Heart right ventricle (tissue), 16 donors: ENCODE measurements at regions of chr3 and their contacts with region 1.

Region 1: GRCh38 chr3:143119009-143119914 is at the start of gene CHST2:
- DNase-seq: peak; percentile 58 to 75
- ATAC-seq: peak; percentile 93 to 96 (median 95)
- H3K4me3 ChIP-seq: peak within 1 kb of the TSS; percentile 39 to 89 (median 76)
- H3K27ac ChIP-seq: peak within 1 kb of the TSS in 9 of 10 donors; percentile 42 to 85 (median 71)
- H3K4me1 ChIP-seq: peaks cover 0 to 47% (median 10%) of the 10 kb centered on the region in 9 donors
- H3K27me3 ChIP-seq: peaks cover 0 to 56% (median 20%) of the 10 kb centered on the region in 7 donors
- CTCF ChIP-seq: peak in 1 of 9 donors; percentile 9
- total RNA-seq, gene CHST2: 0.89 to 7.0 (median 1.7) TPM

Region 2: GRCh38 chr3:143302638-143303171 is 183.4 kb after region 1 on chr3:
- intact Hi-C with region 1: loop called in 1 of 10 experiments (anchors 10 kb)
- DNase-seq: peak; percentile 70 to 74
- ATAC-seq: peak; percentile 81 to 93 (median 90)
- H3K4me3 ChIP-seq: no peak overlapping the region
- H3K27ac ChIP-seq: peak overlapping the region in 7 of 10 donors; percentile 14 to 52 (median 37)
- H3K4me1 ChIP-seq: peaks cover 0 to 49% (median 30%) of the 10 kb centered on the region in 9 donors
- H3K27me3 ChIP-seq: no peaks in the 10 kb centered on the region
- CTCF ChIP-seq: no peak

Region 3: DNA sequence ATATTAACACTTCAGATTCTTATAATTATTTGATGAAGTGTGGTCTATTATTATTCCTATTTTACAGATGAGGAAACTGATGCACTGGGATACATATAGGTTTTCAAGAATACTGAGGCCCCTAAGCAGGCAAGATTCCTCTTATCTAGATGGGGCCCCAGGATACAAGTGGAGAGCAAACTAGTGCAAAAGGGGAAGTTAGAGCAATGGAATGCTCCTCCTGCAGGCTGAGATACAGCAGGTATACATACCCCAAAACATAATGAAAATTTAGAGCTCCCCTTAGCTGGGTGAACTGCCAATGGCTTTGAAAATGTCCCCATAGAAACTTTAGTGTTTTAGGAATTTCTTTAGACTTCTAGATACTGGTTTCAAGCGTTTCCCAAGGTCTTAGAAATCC is 247.4 kb after region 1 on chr3:
- intact Hi-C with region 1: no loop called
- DNase-seq: no peak
- ATAC-seq: no peak
- H3K4me3 ChIP-seq: no peak overlapping the region
- H3K27ac ChIP-seq: no peak overlapping the region
- H3K4me1 ChIP-seq: no peaks in the 10 kb centered on the region
- H3K27me3 ChIP-seq: no peaks in the 10 kb centered on the region
- CTCF ChIP-seq: no peak

Region 4: GRCh38 chr3:143433787-143434378 is 314.6 kb after region 1 on chr3:
- intact Hi-C with region 1: loop called in 1 of 10 experiments (anchors 10 kb)
- DNase-seq: no peak
- ATAC-seq: no peak
- H3K4me3 ChIP-seq: no peak overlapping the region
- H3K27ac ChIP-seq: no peak overlapping the region
- H3K4me1 ChIP-seq: no peaks in the 10 kb centered on the region
- H3K27me3 ChIP-seq: no peaks in the 10 kb centered on the region
- CTCF ChIP-seq: peak in 6 of 9 donors; percentile 21 to 48 (median 29)

Region 5: GRCh38 chr3:143644370-143645089 is 525.3 kb after region 1 on chr3:
- intact Hi-C with region 1: loop called in 3 of 10 experiments (anchors 10 kb)
- DNase-seq: peak in 1 of 2 donors; percentile 41
- ATAC-seq: peak in 5 of 8 donors; percentile 59 to 91 (median 64)
- H3K4me3 ChIP-seq: no peak overlapping the region
- H3K27ac ChIP-seq: no peak overlapping the region
- H3K4me1 ChIP-seq: peaks cover 0 to 7% (median 0%) of the 10 kb centered on the region in 9 donors
- H3K27me3 ChIP-seq: no peaks in the 10 kb centered on the region
- CTCF ChIP-seq: peak; percentile 28 to 71 (median 60)

Region 6: DNA sequence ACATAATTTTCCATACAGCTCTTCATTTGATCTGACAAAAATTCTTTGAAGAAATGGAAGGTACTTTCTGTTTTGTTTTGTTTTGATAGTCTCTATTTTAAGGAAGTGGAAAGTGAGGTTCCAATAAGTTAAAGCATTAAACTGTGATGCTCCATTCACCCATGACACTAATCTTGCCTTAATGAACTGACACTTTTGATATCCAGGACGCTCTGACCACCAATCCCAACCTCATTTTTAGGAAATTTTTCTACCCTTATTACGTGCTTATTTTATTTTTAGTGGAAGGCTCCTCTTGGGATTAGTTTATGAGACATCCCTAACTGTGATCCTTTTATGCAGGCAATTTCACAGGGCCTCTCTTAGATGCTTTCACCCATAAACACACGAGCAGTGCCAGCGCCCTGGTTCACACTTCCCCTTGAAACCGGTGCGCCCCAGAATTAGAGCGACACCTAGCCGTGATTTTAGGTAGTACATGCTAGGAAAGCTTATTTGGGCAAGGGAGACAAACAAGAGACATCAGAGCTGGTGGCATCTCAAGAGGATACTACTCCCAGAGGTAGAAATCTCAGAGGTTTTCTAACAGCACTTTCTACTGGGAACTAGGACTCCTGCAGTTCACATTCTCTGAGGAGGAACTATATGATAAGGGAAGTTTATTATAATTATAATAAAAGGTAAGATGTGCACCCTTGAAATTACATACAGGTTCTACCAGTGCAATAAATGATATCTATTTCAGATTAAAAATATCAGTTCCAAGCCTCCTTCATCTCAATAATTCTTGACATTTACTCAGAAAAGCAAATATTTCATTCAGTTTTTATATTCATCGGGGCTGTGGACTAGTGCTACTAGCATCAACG is 555.1 kb after region 1 on chr3:
- intact Hi-C with region 1: loop called in 3 of 10 experiments (anchors 10 kb)
- DNase-seq: peak; percentile 43 to 72
- ATAC-seq: peak in 6 of 8 donors; percentile 58 to 91 (median 72)
- H3K4me3 ChIP-seq: no peak overlapping the region
- H3K27ac ChIP-seq: no peak overlapping the region
- H3K4me1 ChIP-seq: peaks cover 0 to 7% (median 2%) of the 10 kb centered on the region in 9 donors
- H3K27me3 ChIP-seq: no peaks in the 10 kb centered on the region
- CTCF ChIP-seq: peak; percentile 72 to 95 (median 87)